PC-9 (cell line): ENCODE measurements at regions of chr17 and their contacts with region 1.

Region 1: GRCh38 chr17:64420143-64420971 is 28.6 kb upstream of the MILR1 start:
- DNase-seq: peak; percentile 37 to 60
- H3K4me3 ChIP-seq: no peak overlapping the region
- H3K27ac ChIP-seq: peak overlapping the region; percentile 29; the same call in 1 of the 2 replicates
- H3K4me1 ChIP-seq: peaks cover 22% of the 10 kb centered on the region
- H3K27me3 ChIP-seq: no peaks in the 10 kb centered on the region
- CTCF ChIP-seq: peak; percentile 81

Region 2: DNA sequence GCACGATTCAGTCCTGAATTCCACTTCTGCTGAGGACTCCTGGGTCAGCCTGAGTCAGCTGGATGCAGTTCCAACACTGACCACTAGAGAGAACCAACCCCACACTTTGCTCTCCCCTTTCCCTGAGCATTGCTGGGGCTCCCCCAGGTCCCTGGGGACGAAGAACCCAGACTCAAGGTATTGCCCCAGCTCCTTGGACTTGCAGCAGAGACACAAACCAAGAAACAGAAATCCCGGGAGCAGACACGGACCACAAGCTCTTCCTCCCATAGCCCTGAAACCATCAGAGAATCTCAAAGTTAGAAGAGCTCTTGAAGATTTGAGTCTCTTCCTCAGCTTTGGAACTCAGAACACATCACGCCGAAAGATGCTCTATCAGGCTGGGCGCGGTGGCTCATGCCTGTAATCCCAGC is 501.0 kb before region 1 on chr17:
- CTCF ChIA-PET with region 1: no interaction called
- POLR2A ChIA-PET with region 1: no interaction called
- intact Hi-C with region 1: loop called (anchors 10 kb)
- DNase-seq: peak in 1 of 2 experiments; percentile 66
- H3K4me3 ChIP-seq: no peak overlapping the region
- H3K27ac ChIP-seq: no peak overlapping the region
- H3K4me1 ChIP-seq: no peaks in the 10 kb centered on the region
- H3K27me3 ChIP-seq: peaks cover 18% of the 10 kb centered on the region; the same call in 1 of the 2 replicates
- CTCF ChIP-seq: peak; percentile 96

Region 3: DNA sequence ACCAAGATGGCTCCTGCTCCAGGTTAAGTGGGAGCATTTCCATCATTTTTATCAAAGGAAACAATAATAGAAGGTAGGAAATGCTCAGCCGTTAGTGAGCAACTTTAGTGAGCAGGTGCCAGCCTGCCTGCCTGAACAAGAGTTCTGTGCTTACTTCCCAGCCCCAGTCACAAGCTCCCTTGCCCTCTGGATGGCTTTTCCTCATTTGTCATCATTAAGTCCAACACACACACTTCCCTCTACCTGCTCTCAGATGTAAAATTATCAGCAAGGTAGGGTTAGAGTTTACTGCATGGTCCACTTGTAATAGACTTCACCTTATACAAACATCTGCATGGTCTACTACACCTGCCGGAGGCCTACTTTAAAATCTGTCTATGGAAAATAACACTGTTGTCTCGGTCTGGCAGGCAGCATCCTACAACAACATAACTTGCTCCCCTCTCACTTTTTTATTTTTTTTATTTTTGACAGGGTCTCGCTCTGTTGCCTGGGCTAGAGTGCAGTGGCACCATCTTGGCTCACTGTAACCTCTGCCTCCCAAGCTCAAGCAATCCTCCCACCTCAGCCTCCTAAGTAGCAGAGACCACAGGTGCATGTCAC is 170.0 kb before region 1 on chr17:
- CTCF ChIA-PET with region 1: no interaction called
- POLR2A ChIA-PET with region 1: no interaction called
- intact Hi-C with region 1: no loop called
- DNase-seq: no peak
- H3K4me3 ChIP-seq: no peak overlapping the region
- H3K27ac ChIP-seq: no peak overlapping the region
- H3K4me1 ChIP-seq: no peaks in the 10 kb centered on the region
- H3K27me3 ChIP-seq: no peaks in the 10 kb centered on the region
- CTCF ChIP-seq: no peak

Region 4: GRCh38 chr17:64306850-64307463 is 113.4 kb before region 1 on chr17:
- CTCF ChIA-PET with region 1: interaction called, 4 read pairs
- POLR2A ChIA-PET with region 1: no interaction called
- intact Hi-C with region 1: loop called (anchors 1 kb)
- DNase-seq: peak; percentile 62
- H3K4me3 ChIP-seq: no peak overlapping the region
- H3K27ac ChIP-seq: no peak overlapping the region
- H3K4me1 ChIP-seq: peaks cover 12% of the 10 kb centered on the region
- H3K27me3 ChIP-seq: no peaks in the 10 kb centered on the region
- CTCF ChIP-seq: peak; percentile 95

Region 5: GRCh38 chr17:64339516-64340490 is 80.6 kb before region 1 on chr17:
- CTCF ChIA-PET with region 1: no interaction called
- POLR2A ChIA-PET with region 1: no interaction called
- intact Hi-C with region 1: no loop called
- DNase-seq: no peak
- H3K4me3 ChIP-seq: no peak overlapping the region
- H3K27ac ChIP-seq: no peak overlapping the region
- H3K4me1 ChIP-seq: peaks cover 55% of the 10 kb centered on the region
- H3K27me3 ChIP-seq: no peaks in the 10 kb centered on the region
- CTCF ChIP-seq: no peak

Region 6: GRCh38 chr17:64491034-64491859 is 70.9 kb after region 1 on chr17:
- CTCF ChIA-PET with region 1: interaction called, 11 read pairs
- POLR2A ChIA-PET with region 1: no interaction called
- intact Hi-C with region 1: loop called (anchors 1 kb)
- DNase-seq: peak; percentile 25 to 53
- H3K4me3 ChIP-seq: no peak overlapping the region
- H3K27ac ChIP-seq: no peak overlapping the region
- H3K4me1 ChIP-seq: peaks cover 27% of the 10 kb centered on the region
- H3K27me3 ChIP-seq: no peaks in the 10 kb centered on the region
- CTCF ChIP-seq: peak; percentile 84

Region 7: DNA sequence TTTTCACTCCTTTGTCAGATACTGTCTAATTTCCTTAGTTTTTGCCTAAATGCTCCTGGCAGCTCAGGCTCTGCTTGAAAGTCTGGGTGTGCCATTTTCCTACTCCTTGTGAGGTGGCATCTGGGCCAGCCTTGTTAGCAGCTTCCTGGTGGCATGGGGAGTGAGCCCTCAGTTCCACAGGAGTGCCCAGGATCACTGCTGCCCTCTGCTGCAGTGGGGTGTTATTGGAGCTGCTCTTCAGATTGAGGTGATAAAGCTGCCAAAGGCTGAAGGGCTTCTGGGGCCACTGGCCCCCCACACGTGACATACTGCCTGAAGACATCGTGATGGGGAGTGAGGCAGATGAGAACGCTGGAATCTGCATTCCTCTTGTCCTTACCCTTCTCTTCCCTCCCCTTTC is 113.8 kb after region 1 on chr17:
- CTCF ChIA-PET with region 1: no interaction called
- POLR2A ChIA-PET with region 1: no interaction called
- intact Hi-C with region 1: no loop called
- DNase-seq: peak in 1 of 2 experiments; percentile 20
- H3K4me3 ChIP-seq: no peak overlapping the region
- H3K27ac ChIP-seq: no peak overlapping the region
- H3K4me1 ChIP-seq: no peaks in the 10 kb centered on the region
- H3K27me3 ChIP-seq: no peaks in the 10 kb centered on the region
- CTCF ChIP-seq: peak; percentile 40; the same call in 1 of the 2 replicates

Region 8: GRCh38 chr17:64625541-64625940 is 205.2 kb after region 1 on chr17:
- CTCF ChIA-PET with region 1: interaction called, 11 read pairs
- POLR2A ChIA-PET with region 1: no interaction called
- intact Hi-C with region 1: no loop called
- DNase-seq: no peak
- H3K4me3 ChIP-seq: no peak overlapping the region
- H3K27ac ChIP-seq: peak overlapping the region; percentile 29
- H3K4me1 ChIP-seq: peaks cover 47% of the 10 kb centered on the region
- H3K27me3 ChIP-seq: no peaks in the 10 kb centered on the region
- CTCF ChIP-seq: no peak